Dorsolateral prefrontal cortex (tissue), 120 donors: ENCODE measurements at regions of chr2 and their contacts with region 1.

Region 1: DNA sequence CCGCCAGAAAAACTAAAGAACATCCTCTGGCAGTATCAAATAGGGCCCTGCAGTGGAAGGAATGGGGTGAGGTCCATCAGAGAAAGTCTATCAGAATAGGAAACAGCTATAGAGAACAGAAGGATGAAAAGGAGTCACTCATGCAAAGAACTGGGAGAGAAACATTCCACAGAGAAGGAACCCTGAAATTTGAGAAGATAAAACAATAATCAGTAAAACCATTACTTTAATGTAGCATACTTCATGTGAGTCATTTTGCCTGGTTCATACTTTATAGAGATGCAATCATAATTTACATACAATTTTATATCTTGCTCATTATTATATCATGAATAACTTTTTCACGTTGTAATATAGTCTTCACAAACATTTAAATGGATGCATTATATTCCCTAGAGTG is 402.2 kb downstream of the NCKAP5 start:
- DNase-seq: no peak
- H3K4me3 ChIP-seq: no peak overlapping the region
- H3K27ac ChIP-seq: no peak overlapping the region
- H3K27me3 ChIP-seq: no peaks in the 10 kb centered on the region
- CTCF ChIP-seq: no peak

Region 2: DNA sequence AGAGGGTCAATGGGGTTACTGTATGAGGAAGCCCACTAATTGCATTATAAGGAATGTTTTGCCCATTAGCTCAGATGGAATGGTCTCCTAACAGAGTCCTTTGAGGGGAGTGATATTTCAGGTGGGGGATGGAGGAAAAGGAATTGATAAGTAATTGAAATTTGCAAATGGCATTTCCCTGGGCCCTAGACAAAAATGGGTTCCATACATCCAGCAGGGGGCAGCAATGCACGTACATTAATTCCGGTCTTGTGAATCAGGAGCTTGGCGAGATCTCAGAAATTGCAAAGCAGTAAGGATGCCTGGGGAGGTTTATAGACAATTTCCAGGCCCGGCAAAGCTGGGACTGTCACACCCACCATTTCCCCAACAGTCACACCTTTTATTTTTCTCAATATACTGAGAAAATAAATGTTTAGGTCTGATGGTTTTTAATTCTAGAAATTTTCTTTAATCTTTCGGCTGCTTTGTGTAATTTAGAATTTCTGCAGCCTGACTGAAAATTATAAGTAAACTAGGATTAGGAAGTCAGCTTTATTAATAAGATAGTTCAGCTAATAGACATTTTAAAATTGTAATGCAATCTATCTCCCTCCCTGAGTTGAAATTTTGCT is 618.9 kb before region 1 on chr2:
- intact Hi-C with region 1: loop called (anchors 2 to 10 kb)
- DNase-seq: peak; percentile 46 to 89 (median 70)
- H3K4me3 ChIP-seq: no peak overlapping the region
- H3K27ac ChIP-seq: no peak overlapping the region
- H3K27me3 ChIP-seq: peaks cover 0 to 4% (median 0%) of the 10 kb centered on the region in 45 donors
- CTCF ChIP-seq: peak; percentile 73 to 92 (median 83)

Region 3: GRCh38 chr2:132766573-132766972 is 399.5 kb before region 1 on chr2:
- intact Hi-C with region 1: no loop called
- DNase-seq: no peak
- H3K4me3 ChIP-seq: no peak overlapping the region
- H3K27ac ChIP-seq: no peak overlapping the region
- H3K27me3 ChIP-seq: no peaks in the 10 kb centered on the region
- CTCF ChIP-seq: no peak

Region 4: DNA sequence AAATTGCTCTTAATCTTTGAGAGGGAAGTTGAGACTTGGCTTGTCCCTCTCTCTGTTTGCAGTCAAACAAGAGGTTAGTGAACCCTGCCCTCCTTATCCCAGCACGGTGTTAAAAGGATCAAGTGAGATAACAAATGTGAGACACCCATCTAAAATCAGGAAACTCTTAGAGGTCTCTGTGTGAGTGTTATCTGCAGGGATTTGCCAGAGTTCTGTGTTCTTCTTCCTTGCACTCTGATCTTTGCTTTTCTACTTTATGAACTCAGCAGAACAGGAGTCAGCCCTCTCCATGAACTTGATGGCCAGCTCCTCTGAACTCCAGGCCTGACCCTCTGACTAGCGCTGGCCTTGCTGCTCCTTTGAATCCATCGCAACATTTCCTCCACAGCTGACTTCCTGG is 278.4 kb after region 1 on chr2:
- intact Hi-C with region 1: no loop called
- DNase-seq: no peak
- H3K4me3 ChIP-seq: no peak overlapping the region
- H3K27ac ChIP-seq: no peak overlapping the region
- H3K27me3 ChIP-seq: peaks cover 0 to 6% (median 0%) of the 10 kb centered on the region in 45 donors
- CTCF ChIP-seq: no peak

Region 5: DNA sequence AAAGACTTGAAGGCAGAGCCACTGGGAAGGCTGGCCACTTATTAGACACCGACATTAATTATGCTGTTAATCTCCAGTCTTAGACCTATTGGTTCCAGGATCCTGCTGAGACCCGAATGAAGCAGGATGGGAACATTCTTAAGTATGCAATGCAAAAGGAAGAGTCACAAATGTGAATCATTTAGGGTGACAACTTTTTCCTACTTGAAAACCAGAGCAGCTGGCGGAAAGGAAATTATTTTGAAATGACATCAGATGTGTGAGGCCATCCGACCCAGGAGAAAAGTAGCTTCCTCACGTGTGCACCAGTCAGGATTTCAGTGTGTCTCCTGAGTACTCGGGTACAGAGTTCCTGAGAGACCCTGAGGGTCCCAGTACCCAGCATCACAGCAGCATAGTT is 625.2 kb after region 1 on chr2:
- intact Hi-C with region 1: loop called in 1 of 2 experiments (anchors 5 kb)
- DNase-seq: no peak
- H3K4me3 ChIP-seq: no peak overlapping the region
- H3K27ac ChIP-seq: no peak overlapping the region
- H3K27me3 ChIP-seq: peaks cover 0 to 2% (median 0%) of the 10 kb centered on the region in 45 donors
- CTCF ChIP-seq: no peak